ENCODE measurements at regions of chr6 and their contacts with region 1.

Region 1: DNA sequence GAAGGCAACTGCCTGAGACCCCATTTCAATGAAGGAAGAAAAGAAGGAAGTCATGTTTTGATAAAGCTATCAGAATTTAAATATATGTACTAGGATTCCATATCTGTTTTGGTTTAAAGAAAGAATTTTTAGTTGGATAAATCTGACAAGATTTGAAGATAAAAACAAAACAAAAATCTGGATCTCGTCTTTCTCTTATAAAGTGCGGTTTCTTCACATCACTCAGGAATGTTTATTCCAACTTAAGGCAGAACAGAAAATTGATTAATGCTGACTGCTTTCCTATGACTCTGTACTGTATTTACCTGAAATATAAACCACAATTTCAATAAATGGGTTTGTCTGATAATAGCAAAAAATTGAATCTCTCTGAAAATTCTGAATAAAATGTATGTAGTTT is 439.7 kb downstream of the RFPL4B start:
- DNase-seq: no peak

Region 2: GRCh38 chr6:112802144-112802543 is 15.3 kb after region 1 on chr6:
- intact Hi-C with region 1: no loop called
- DNase-seq: no peak

Region 3: GRCh38 chr6:112931832-112932231 is 145.0 kb after region 1 on chr6:
- intact Hi-C with region 1: loop called in 1 of 2 experiments (anchors 5 kb)
- DNase-seq: no peak